H1 (cell line): ENCODE measurements at regions of chr19 and their contacts with region 1.

Region 1: DNA sequence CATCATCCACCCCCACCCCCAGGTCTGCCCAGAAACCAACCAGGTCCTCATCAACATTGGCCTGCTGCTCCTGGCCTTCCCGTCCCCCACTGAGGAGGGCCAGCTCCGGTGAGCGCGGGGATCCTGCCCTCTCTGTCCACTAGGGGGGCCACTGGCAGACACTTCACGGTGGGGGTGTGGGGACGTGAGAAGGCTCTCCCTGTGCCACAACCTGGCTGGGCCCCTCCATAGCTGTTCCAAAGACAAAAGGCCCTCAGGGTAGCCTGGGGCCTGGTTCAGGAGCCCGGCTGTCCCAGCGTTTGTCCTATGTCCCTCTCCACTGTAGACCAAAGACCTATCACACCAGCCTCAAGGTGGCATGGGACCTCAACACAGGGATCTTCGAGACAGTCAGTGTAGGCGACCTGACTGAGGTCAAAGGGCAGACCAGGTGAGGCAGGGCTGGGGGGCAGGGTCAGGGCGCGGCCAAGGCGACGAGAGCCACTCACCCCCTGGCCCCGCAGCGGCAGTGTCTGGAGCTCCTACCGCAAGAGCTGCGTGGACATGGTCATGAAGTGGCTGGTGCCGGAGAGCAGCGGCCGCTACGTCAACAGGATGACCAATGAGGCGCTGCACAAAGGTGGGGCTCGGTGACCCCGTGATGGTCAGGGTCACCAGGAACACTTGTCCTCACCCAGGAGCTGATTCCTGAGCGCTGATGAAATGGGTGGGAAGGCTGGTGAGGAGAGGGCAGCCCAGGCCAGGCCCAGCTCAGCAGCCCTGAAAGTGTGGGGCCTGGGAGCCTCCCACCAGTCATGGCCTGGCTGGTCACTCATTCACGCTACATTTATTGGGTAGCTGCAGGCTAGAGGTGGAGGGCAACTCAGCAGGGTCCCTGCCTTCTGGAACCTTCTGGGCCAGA is 7.9 kb downstream of the DCAF15 start:
- DNase-seq: peak in 1 of 2 experiments; percentile 73
- H3K4me3 ChIP-seq: no peak overlapping the region
- H3K27ac ChIP-seq: no peak overlapping the region; the same call in 1 of the 2 replicates
- H3K4me1 ChIP-seq: peaks cover 0 to 9% (median 4%) of the 10 kb centered on the region in 4 experiments; a peak in 4 of 7 replicates
- H3K27me3 ChIP-seq: peaks cover 0 to 4% (median 0%) of the 10 kb centered on the region in 4 experiments; a peak in 2 of 7 replicates
- CTCF ChIP-seq: peak; percentile 44 to 68 (median 60)
- EP300 ChIP-seq: no peak
- POLR2A ChIP-seq: no peak
- RAD21 ChIP-seq: peak; percentile 16 to 51; a peak in 3 of 4 replicates

Region 2: GRCh38 chr19:13932911-13933393 is 27.3 kb before region 1 on chr19:
- CTCF ChIA-PET with region 1: interaction called, 26 read pairs
- POLR2A ChIA-PET with region 1: interaction called, 39 read pairs
- DNase-seq: no peak
- H3K4me3 ChIP-seq: no peak overlapping the region
- H3K27ac ChIP-seq: no peak overlapping the region
- H3K4me1 ChIP-seq: peaks cover 3 to 35% (median 15%) of the 10 kb centered on the region in 4 experiments
- H3K27me3 ChIP-seq: peaks cover 0 to 2% (median 0%) of the 10 kb centered on the region in 4 experiments; a peak in 1 of 7 replicates
- CTCF ChIP-seq: no peak
- EP300 ChIP-seq: no peak
- POLR2A ChIP-seq: no peak
- RAD21 ChIP-seq: no peak

Region 3: DNA sequence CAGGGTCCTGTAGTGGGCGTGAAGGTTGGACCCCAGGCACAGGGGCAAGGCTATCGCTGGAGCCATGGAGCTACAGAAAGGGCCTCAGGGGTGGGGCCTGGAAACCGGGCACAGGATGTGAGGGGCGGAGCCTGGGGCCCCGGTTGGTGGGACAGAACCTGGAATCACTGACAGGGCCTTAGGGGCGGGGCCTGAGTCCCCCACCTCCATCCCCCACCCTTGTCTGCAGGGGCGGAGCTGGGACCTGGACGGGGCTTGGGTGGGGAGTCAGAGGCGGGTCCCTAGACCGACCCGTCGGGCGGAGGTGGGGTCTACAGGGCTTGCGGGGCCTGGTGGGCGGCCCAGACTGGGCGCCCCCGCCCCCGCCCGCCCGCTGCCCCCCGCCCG is 18.1 kb after region 1 on chr19:
- CTCF ChIA-PET with region 1: interaction called, 77 read pairs
- POLR2A ChIA-PET with region 1: interaction called, 44 read pairs
- DNase-seq: peak; percentile 94 to 98
- H3K4me3 ChIP-seq: peak overlapping the region; percentile 42 to 70 (median 44)
- H3K27ac ChIP-seq: peak overlapping the region; percentile 56; the same call in 1 of the 2 replicates
- H3K4me1 ChIP-seq: peaks cover 0 to 15% (median 8%) of the 10 kb centered on the region in 4 experiments; a peak in 4 of 7 replicates
- H3K27me3 ChIP-seq: no peaks in the 10 kb centered on the region
- CTCF ChIP-seq: 0 out of 4 replicates have a peak, but pooled peaks of 1 of the 3 experiments have one; percentile 3
- EP300 ChIP-seq: no peak
- POLR2A ChIP-seq: no peak; a peak in 1 of 3 replicates
- RAD21 ChIP-seq: no peak

Region 4: GRCh38 chr19:14006243-14006765 is 46.1 kb after region 1 on chr19 and contains the start of gene RFX1:
- CTCF ChIA-PET with region 1: interaction called, 4 read pairs
- POLR2A ChIA-PET with region 1: interaction called, 16 read pairs
- DNase-seq: peak; percentile 98 to 100
- H3K4me3 ChIP-seq: peak within 1 kb of the TSS; percentile 62 to 81 (median 69)
- H3K27ac ChIP-seq: peak within 1 kb of the TSS; percentile 95
- H3K4me1 ChIP-seq: peaks cover 0 to 4% (median under 1%) of the 10 kb centered on the region in 4 experiments; a peak in 5 of 7 replicates
- H3K27me3 ChIP-seq: no peaks in the 10 kb centered on the region
- CTCF ChIP-seq: no peak
- EP300 ChIP-seq: peak; percentile 43 to 90
- POLR2A ChIP-seq: peak in 1 of 2 experiments; percentile 44; a peak in 2 of 3 replicates
- RAD21 ChIP-seq: no peak
- total RNA-seq, gene RFX1: 16.1 and 17.0 TPM in 2 replicates

Region 5: GRCh38 chr19:14059093-14059480 is 98.9 kb after region 1 on chr19:
- CTCF ChIA-PET with region 1: interaction called, 14 read pairs
- POLR2A ChIA-PET with region 1: interaction called, 3 read pairs
- DNase-seq: peak in 1 of 2 experiments; percentile 93
- H3K4me3 ChIP-seq: no peak overlapping the region
- H3K27ac ChIP-seq: no peak overlapping the region
- H3K4me1 ChIP-seq: peaks cover 0 to 10% (median 3%) of the 10 kb centered on the region in 4 experiments; a peak in 4 of 7 replicates
- H3K27me3 ChIP-seq: peaks cover 5 to 19% (median 14%) of the 10 kb centered on the region in 4 experiments
- CTCF ChIP-seq: peak; percentile 74 to 96 (median 83)
- EP300 ChIP-seq: no peak
- POLR2A ChIP-seq: no peak
- RAD21 ChIP-seq: peak; percentile 50 to 52; a peak in 3 of 4 replicates